ENCODE measurements at regions of chr7 and their contacts with region 1.

Region 1: DNA sequence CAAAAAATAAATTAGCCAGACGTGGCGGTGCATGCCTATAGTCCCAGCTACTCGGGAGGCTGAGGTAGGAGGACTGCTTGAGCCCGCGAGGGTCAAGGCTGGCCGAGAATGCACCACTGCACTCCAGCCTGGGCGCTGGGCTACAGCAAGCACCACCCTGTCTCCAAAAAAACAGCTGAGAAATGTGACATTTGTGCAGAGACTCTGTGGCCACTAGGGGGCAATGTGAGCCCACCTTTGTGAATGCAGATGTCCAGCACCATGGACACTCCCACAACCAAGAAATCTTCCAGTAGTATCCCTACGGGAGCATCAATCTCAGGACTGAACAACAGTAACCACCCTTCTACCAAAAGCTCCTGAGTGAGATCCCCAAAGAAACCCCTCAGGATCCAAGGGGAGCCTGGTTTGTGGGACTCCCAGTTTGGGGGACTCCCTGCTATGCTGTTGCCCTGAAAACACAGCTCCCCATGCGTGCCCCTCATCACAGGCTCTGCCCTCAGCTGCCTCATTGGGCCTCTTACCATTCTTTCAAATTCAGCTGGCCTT is 6.2 kb upstream of the AHCYL2 start:
- DNase-seq: peak; percentile 87
- ATAC-seq: peak; percentile 88
- H3K4me3 Mint-ChIP-seq: no peak overlapping the region
- H3K27ac Mint-ChIP-seq: peak overlapping the region; percentile 55
- H3K4me1 Mint-ChIP-seq: peaks cover 13% of the 10 kb centered on the region
- H3K27me3 Mint-ChIP-seq: no peaks in the 10 kb centered on the region

Region 2: GRCh38 chr7:129169171-129169671 is 49.4 kb before region 1 on chr7:
- CTCF ChIA-PET with region 1: interaction called, 20 read pairs
- POLR2A ChIA-PET with region 1: interaction called, 3 read pairs
- intact Hi-C with region 1: no loop called
- DNase-seq: peak; percentile 55
- ATAC-seq: peak; percentile 60
- H3K4me3 Mint-ChIP-seq: peak overlapping the region; percentile 45
- H3K27ac Mint-ChIP-seq: peak overlapping the region; percentile 28
- H3K4me1 Mint-ChIP-seq: peaks cover 15% of the 10 kb centered on the region
- H3K27me3 Mint-ChIP-seq: peaks cover 2% of the 10 kb centered on the region

Region 3: GRCh38 chr7:129240119-129240815 is 21.7 kb after region 1 on chr7:
- CTCF ChIA-PET with region 1: interaction called, 10 read pairs
- POLR2A ChIA-PET with region 1: no interaction called
- intact Hi-C with region 1: no loop called
- DNase-seq: no peak
- ATAC-seq: no peak
- H3K4me3 Mint-ChIP-seq: no peak overlapping the region
- H3K27ac Mint-ChIP-seq: no peak overlapping the region
- H3K4me1 Mint-ChIP-seq: peaks cover 5% of the 10 kb centered on the region
- H3K27me3 Mint-ChIP-seq: no peaks in the 10 kb centered on the region

Region 4: GRCh38 chr7:129271500-129272355 is 53.1 kb after region 1 on chr7:
- CTCF ChIA-PET with region 1: interaction called, 239 read pairs
- POLR2A ChIA-PET with region 1: no interaction called
- intact Hi-C with region 1: loop called (anchors 1 kb)
- DNase-seq: peak; percentile 76
- ATAC-seq: peak; percentile 97
- H3K4me3 Mint-ChIP-seq: no peak overlapping the region
- H3K27ac Mint-ChIP-seq: peak overlapping the region; percentile 53
- H3K4me1 Mint-ChIP-seq: peaks cover 6% of the 10 kb centered on the region
- H3K27me3 Mint-ChIP-seq: no peaks in the 10 kb centered on the region

Region 5: DNA sequence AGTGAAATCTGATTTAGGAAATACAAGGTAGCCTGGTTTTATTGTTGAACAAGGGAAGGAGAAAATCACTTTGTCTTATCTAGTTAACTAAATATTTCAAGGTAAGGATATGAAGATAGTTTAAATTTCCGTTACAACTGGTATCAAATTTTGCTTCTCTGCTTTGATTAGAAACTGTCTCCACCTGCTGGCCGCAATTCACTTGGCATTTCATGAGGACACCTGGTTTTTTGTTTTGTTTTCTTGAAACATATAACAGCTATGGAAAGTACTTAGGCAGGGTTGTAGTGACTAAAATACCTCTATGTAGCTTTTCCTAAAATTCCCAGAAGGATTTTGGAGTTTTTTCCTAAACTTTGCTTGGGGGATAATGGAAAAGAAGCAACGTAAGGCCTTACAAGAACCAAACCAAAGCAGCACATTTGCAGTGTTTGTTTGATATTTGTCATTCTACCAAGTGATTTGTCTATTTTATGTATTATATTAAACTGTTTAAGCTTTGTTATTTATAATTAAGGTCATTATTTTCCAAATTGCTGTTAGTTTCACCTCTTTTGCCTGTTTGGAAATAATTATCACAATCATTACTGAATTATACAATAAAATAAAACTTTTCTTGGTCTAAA is 79.8 kb after region 1 on chr7:
- CTCF ChIA-PET with region 1: interaction called, 151 read pairs
- POLR2A ChIA-PET with region 1: no interaction called
- intact Hi-C with region 1: loop called (anchors 1 kb)
- DNase-seq: peak; percentile 75
- ATAC-seq: no peak
- H3K4me3 Mint-ChIP-seq: no peak overlapping the region
- H3K27ac Mint-ChIP-seq: no peak overlapping the region
- H3K4me1 Mint-ChIP-seq: peaks cover 2% of the 10 kb centered on the region
- H3K27me3 Mint-ChIP-seq: no peaks in the 10 kb centered on the region

Region 6: GRCh38 chr7:129376076-129376777 is 157.6 kb after region 1 on chr7:
- CTCF ChIA-PET with region 1: interaction called, 10 read pairs
- POLR2A ChIA-PET with region 1: no interaction called
- intact Hi-C with region 1: loop called in 1 of 2 experiments (anchors 2 kb)
- DNase-seq: peak; percentile 80
- ATAC-seq: peak; percentile 88
- H3K4me3 Mint-ChIP-seq: no peak overlapping the region
- H3K27ac Mint-ChIP-seq: no peak overlapping the region
- H3K4me1 Mint-ChIP-seq: peaks cover 30% of the 10 kb centered on the region
- H3K27me3 Mint-ChIP-seq: no peaks in the 10 kb centered on the region

Region 7: DNA sequence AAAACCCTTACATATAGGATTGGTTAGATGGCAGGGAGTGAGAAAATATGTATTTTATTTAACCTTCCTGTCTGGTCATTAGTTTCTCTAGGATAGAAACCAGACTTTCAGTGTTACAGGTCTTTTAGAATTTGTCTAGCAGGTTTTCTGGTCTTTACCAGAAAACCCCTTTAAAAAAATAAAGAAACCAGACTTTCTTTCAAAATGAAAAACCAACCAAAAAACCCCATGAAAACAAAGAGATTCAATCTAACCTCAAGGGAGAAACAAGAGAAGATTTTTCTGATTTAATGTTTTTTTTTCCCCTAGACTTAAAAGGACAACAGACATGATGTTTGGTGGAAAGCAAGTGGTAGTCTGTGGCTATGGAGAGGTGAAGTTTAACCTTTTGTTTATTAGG is 186.9 kb after region 1 on chr7:
- CTCF ChIA-PET with region 1: no interaction called
- POLR2A ChIA-PET with region 1: no interaction called
- intact Hi-C with region 1: no loop called
- DNase-seq: no peak
- ATAC-seq: no peak
- H3K4me3 Mint-ChIP-seq: no peak overlapping the region
- H3K27ac Mint-ChIP-seq: peak overlapping the region; percentile 47
- H3K4me1 Mint-ChIP-seq: peaks cover 33% of the 10 kb centered on the region
- H3K27me3 Mint-ChIP-seq: no peaks in the 10 kb centered on the region

Measured in activated CD4-positive, alpha-beta T cell treated with anti-CD3 and anti-CD28 coated beads for 36 hours (primary cell).